ENCODE measurements at regions of chr11 and their contacts with region 1.

Region 1: DNA sequence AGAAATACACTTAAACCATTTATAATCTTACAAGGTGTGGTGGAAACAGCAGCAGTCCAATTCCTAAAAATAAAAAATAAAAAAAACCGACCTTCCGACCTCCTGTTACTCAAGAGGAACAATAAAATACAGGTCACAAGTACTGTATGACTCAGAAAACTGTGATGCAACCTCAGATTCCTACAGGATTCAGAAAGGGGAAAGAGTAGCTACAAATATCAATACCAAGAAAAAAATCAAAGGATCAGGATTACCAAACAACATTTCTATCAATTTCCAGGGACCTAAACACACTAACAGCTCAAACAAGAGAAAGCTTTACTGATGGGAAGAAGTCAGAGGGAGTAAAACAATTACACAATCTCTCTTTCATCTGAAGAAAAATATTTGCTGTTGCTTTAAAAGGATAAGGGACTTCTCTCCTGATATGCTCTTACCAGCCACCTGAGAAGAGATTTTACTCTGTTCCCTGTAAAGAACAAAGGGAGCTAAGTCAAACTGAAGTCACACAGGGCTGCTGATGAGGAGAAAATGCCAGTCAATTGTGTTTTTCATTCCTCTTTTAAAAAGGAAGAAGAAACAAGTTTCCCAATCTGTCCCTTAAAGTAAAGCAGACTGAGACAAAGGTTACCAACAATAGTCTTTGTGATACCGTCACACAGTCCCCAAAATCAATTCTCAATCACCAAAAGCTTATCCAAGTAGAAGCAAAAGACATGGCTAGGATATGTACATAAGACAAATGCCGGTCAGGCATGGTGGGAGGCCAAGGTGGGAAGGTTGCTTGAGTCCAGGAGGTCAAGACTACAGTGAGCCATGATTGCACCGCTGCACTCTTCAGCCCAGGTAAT is 39.4 kb downstream of the AMBRA1 start:
- DNase-seq: no peak
- ATAC-seq: peak; percentile 57

Region 2: GRCh38 chr11:46593550-46594373 is 39.3 kb after region 1 on chr11 and contains the start of gene AMBRA1:
- intact Hi-C with region 1: loop called (anchors 5 kb)
- DNase-seq: peak; percentile 92
- ATAC-seq: peak; percentile 91
- total RNA-seq, gene AMBRA1: 14.8 TPM

Measured in Right ventricle myocardium inferior (tissue), 1 donor.